ENCODE measurements at regions of chr22 and their contacts with region 1.

Region 1: DNA sequence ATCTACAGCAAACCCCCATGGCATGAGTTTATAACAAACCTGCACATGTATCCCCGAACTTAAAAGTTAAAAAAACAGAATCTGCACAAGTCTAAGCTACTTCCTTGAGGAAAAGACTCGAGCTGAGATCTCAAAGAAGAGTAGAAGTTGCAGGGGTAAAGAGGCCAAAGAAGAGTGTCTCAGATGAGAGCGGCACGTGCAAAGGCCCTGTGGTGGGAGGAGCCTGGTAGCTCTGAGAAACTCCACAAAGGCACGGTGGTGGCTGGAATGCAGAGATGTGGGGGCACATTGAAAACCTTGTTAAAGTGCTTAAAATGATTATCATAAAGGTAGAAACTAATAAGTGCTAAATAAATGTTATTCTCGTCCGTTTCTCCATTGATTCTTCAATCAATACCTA is 103.2 kb upstream of the GRK3 start:
- DNase-seq: no peak
- ATAC-seq: no peak

Region 2: GRCh38 chr22:25509374-25509791 is 48.1 kb after region 1 on chr22:
- intact Hi-C with region 1: no loop called
- DNase-seq: no peak
- ATAC-seq: no peak

Region 3: DNA sequence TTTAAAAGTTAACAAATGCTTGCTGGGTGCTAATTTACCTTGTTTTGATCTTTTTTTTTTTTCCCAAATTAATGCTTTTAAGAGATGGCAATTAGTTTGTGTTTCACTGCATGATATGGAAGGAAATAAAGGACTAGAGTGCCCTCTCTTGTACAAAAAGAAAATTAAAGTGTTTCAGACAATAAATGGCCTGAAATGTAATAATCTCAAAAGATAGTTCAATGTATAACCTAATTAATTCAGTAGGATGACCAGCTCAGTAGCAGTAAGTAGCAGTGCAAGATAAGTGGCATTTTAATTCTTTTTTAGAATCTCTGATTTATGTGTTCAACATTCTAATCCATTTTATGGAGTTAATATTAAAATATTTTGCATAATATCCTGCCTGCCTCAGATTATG is 240.7 kb after region 1 on chr22:
- intact Hi-C with region 1: loop called in 1 of 2 experiments (anchors 5 kb)
- DNase-seq: no peak
- ATAC-seq: peak; percentile 40

Region 4: GRCh38 chr22:25777870-25778269 is 316.6 kb after region 1 on chr22:
- intact Hi-C with region 1: loop called in 1 of 2 experiments (anchors 5 kb)
- DNase-seq: no peak
- ATAC-seq: peak; percentile 67